ENCODE measurements at regions of chr4 and their contacts with region 1.

Region 1: GRCh38 chr4:879729-880077 is 52.4 kb downstream of the GAK start:
- DNase-seq: peak; percentile 50
- H3K4me3 Mint-ChIP-seq: peak overlapping the region; percentile 81
- H3K27ac Mint-ChIP-seq: peak overlapping the region; percentile 98
- H3K4me1 Mint-ChIP-seq: peaks cover 29% of the 10 kb centered on the region
- H3K27me3 Mint-ChIP-seq: no peaks in the 10 kb centered on the region

Region 2: GRCh38 chr4:845233-845835 is 34.4 kb before region 1 on chr4:
- intact Hi-C with region 1: no loop called
- DNase-seq: no peak
- H3K4me3 Mint-ChIP-seq: no peak overlapping the region
- H3K27ac Mint-ChIP-seq: no peak overlapping the region
- H3K4me1 Mint-ChIP-seq: no peaks in the 10 kb centered on the region
- H3K27me3 Mint-ChIP-seq: no peaks in the 10 kb centered on the region

Region 3: DNA sequence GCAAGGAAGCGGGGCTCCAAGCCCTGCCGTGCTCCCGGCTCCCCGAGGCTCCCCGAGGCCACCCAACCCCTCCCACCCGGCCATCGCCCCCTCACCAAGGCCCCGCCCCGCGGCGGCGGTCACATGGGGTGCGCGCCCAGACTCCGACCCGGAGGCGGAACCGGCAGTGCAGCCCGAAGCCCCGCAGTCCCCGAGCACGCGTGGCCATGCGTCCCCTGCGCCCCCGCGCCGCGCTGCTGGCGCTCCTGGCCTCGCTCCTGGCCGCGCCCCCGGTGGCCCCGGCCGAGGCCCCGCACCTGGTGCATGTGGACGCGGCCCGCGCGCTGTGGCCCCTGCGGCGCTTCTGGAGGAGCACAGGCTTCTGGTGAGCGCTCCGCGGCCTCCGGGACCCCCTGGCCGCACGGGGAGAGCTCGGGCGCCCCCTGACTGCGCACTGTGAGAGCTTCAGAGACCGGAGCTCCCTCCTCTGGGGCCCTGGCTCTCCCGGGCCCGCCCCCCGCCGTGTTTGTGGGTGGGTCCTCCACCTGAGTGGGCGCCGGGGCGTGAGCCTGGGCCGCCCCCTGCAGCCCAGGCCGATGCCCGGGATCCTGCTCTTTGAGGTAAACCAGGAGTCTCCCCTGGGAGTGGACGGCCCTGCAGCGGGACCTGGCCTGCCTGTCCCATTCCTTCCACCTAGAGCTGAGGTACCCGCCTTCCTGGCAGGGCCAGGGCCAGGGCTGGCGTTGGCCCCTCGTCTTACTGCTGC is 107.3 kb after region 1 on chr4 and contains the start of gene IDUA:
- intact Hi-C with region 1: loop called (anchors 1 kb)
- DNase-seq: peak; percentile 80
- H3K4me3 Mint-ChIP-seq: peak within 1 kb of the TSS; percentile 87
- H3K27ac Mint-ChIP-seq: peak within 1 kb of the TSS; percentile 83
- H3K4me1 Mint-ChIP-seq: peaks cover 17% of the 10 kb centered on the region
- H3K27me3 Mint-ChIP-seq: no peaks in the 10 kb centered on the region
- total RNA-seq, gene IDUA: 23.6 and 25.5 TPM in 2 replicates

Region 4: GRCh38 chr4:1289207-1290164 is 409.8 kb after region 1 on chr4 and contains the start of gene MAEA:
- intact Hi-C with region 1: no loop called
- DNase-seq: peak; percentile 98
- H3K4me3 Mint-ChIP-seq: peak within 1 kb of the TSS; percentile 97
- H3K27ac Mint-ChIP-seq: peak within 1 kb of the TSS; percentile 90
- H3K4me1 Mint-ChIP-seq: peaks cover 23% of the 10 kb centered on the region
- H3K27me3 Mint-ChIP-seq: no peaks in the 10 kb centered on the region
- total RNA-seq, gene MAEA: 59.2 and 62.8 TPM in 2 replicates

Region 5: GRCh38 chr4:1419708-1420107 is 540.0 kb after region 1 on chr4:
- intact Hi-C with region 1: no loop called
- DNase-seq: no peak
- H3K4me3 Mint-ChIP-seq: no peak overlapping the region
- H3K27ac Mint-ChIP-seq: no peak overlapping the region
- H3K4me1 Mint-ChIP-seq: no peaks in the 10 kb centered on the region
- H3K27me3 Mint-ChIP-seq: peaks cover 8% of the 10 kb centered on the region

Measured in activated T-helper 2 cell treated with anti-CD3 and anti-CD28 coated beads, Interferon-gamma antibody, Interleukin-2, Interleukin-4, amounts not matched to agents 10 μg/mL and 5 μg/mL and 100 μg/mL, durations not matched to agents 14 hours and 24 hours and 36 hours (primary cell).